Dendritic cell treated with granulocyte-macrophage colony-stimulating factor and Interleukin-4, amounts not matched to agents 40 ng/mL and 50 ng/mL, for 4 days (primary cell): ENCODE measurements at regions of chr10 and their contacts with region 1.

Region 1: DNA sequence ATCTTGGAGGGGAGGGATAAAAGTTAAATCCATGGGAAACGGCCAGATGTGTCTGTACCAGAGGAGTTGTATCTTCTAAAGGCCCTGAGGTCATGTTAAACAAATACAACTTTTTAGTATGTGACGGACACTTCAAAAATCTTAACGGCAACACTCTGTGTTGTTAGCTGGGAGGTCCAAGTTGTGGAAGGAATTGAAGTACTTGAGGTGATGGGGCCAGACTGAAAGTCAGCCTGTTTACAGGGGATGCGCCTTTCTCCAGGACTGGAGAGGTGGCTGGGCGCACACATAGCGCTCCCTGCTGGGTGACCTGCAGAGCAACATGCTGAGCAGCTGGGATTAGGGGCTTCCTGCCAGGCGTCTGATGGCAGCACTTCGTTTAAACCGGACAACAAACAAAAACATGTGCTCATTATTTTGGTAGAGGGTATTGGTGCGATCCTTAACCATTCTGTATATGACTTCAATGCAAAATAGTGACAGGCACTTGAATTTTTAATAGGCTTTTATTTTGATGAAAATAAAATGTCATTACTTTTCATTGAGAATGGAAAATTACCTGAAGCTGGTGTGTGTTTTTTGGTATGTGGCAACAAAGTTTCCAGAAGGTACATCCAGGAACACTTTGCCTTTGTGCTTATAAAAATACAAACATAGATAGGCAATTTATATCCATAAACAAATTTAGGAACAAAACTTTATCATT is 198.2 kb downstream of the MLLT10 start:
- H3K4me3 Mint-ChIP-seq: no peak overlapping the region
- H3K27ac Mint-ChIP-seq: no peak overlapping the region
- H3K4me1 Mint-ChIP-seq: peaks cover 7% of the 10 kb centered on the region
- H3K27me3 Mint-ChIP-seq: no peaks in the 10 kb centered on the region

Region 2: DNA sequence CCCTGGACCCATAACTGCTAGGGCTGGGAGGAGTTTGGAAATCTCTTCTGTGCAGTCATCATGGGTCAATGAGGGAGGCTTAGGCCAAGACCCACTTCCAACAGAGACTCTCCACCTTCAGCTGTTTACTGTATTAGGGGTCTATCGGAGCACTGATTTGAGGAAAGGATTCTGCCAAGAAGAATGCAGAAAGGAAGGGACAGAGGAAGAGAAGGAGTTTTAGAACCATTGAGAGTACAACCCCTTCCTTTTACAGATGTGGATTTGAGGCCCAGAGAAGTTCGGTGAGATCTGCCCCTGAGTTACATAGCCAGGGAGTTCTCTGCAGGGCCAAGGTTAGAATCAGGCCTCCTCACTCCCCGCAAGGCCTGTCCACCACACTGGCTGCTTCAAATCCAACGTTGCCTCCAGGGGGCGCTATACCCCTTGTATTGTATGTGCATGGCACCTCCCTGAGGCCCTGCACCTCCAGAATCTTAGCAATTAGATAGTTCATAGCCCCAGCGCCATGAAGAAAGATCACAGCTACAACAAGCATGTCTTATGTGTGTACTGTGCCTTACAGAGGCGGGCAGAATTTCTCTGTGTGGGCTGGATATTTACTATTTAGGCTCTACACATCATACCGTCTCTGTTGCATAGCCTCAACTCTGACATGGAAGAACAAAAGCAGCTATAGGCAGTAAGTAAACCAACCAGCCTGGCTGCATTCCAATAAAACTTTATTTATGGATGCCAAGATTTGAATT is 453.6 kb before region 1 on chr10:
- intact Hi-C with region 1: loop called (anchors 5 kb)
- H3K4me3 Mint-ChIP-seq: no peak overlapping the region
- H3K27ac Mint-ChIP-seq: no peak overlapping the region
- H3K4me1 Mint-ChIP-seq: no peaks in the 10 kb centered on the region
- H3K27me3 Mint-ChIP-seq: peaks cover 1% of the 10 kb centered on the region